Ascending aorta (tissue), 2 donors: ENCODE measurements at regions of chr11 and their contacts with region 1.

Region 1: GRCh38 chr11:46936138-46937110 is at the start of gene CSTPP1:
- DNase-seq: peak; percentile 75 to 95
- H3K4me3 ChIP-seq: peak within 1 kb of the TSS; percentile 71 to 91
- H3K27ac ChIP-seq: peak within 1 kb of the TSS in 1 of 2 donors; percentile 44
- H3K4me1 ChIP-seq: peaks cover 0 to 6% of the 10 kb centered on the region in 2 donors
- H3K27me3 ChIP-seq: no peaks in the 10 kb centered on the region
- CTCF ChIP-seq: no peak
- total RNA-seq, gene CSTPP1: 16.6 TPM

Region 2: DNA sequence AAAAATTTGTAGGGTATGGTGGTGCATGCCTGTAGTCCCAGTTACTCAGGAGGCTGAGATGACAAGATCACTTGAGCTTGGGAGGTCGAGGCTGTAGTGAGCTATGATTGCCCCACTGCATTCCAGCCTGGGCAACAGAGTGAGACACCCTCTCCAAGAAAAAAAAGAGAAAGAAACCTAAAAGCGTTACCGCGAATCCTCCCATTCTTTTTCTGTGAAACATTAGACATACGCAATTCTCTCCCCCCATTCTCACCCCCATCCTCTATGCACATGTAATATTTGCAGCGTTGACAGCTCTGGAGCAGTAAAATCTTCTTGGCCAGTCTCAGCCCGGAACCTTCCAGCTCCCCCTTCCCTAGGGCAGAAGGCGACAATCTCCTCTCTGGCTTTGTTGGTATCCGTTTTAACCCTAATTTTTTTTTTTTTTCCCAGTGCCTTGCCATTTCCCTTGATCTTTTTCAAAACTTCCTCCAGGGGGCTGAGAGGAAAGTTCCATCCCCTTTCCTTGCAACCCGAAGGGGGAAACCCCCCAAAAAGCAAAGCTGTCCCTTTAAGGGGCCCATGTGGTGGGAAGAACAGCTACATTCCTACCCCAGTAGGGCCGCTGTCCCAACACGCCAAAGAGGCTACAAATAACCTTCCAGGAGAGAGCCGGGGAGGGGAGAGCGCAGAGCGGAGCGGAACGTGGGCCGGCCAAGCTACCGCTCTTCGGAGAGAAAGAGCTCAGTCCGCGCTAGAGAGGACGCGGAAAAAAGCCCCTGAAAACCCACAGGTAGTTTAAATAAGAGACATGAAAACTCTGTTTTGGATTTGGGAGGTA is 19.9 kb before region 1 on chr11:
- intact Hi-C with region 1: loop called (anchors 2 kb)
- DNase-seq: peak in 1 of 2 donors; percentile 81
- H3K4me3 ChIP-seq: peak overlapping the region; percentile 78 to 89
- H3K27ac ChIP-seq: peak overlapping the region; percentile 34 to 58
- H3K4me1 ChIP-seq: peaks cover 8 to 13% of the 10 kb centered on the region in 2 donors
- H3K27me3 ChIP-seq: no peaks in the 10 kb centered on the region
- CTCF ChIP-seq: peak in 1 of 3 experiments; percentile 18